K562 (cell line): ENCODE measurements at regions of chr17 and their contacts with region 1.

Region 1: DNA sequence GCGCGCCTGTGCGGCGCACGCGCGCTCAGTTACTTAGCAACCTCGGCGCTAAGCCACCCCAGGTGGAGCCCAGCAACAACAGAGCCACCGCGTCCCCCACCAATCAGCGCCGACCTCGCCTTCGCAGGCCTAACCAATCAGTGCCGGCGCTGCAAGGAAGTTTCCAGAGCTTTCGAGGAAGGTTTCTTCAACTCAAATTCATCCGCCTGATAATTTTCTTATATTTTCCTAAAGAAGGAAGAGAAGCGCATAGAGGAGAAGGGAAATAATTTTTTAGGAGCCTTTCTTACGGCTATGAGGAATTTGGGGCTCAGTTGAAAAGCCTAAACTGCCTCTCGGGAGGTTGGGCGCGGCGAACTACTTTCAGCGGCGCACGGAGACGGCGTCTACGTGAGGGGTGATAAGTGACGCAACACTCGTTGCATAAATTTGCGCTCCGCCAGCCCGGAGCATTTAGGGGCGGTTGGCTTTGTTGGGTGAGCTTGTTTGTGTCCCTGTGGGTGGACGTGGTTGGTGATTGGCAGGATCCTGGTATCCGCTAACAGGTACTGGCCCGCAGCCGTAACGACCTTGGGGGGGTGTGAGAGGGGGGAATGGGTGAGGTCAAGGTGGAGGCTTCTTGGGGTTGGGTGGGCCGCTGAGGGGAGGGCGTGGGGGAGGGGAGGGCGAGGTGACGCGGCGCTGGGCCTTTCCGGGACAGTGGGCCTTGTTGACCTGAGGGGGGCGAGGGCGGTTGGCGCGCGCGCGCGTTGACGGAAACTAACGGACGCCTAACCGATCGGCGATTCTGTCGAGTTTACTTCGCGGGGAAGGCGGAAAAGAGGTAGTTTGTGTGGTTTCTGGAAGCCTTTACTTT is at the start of gene UBB:
- DNase-seq: peak; percentile 90 to 96 (median 92)
- ATAC-seq: peak; percentile 95
- H3K4me3 ChIP-seq: peak within 1 kb of the TSS; percentile 55
- H3K27ac ChIP-seq: peak within 1 kb of the TSS; percentile 94
- H3K4me1 ChIP-seq: peaks cover 17 to 23% of the 10 kb centered on the region in 2 experiments; a peak in 4 of 5 replicates
- H3K27me3 ChIP-seq: no peaks in the 10 kb centered on the region
- CTCF ChIP-seq: no peak; a peak in 3 of 6 replicates
- EP300 ChIP-seq: peak; percentile 64
- POLR2A ChIP-seq: peak; percentile 99
- RAD21 ChIP-seq: no peak
- polyA plus RNA-seq, gene UBB: 3,942 to 4,143 TPM

Region 2: DNA sequence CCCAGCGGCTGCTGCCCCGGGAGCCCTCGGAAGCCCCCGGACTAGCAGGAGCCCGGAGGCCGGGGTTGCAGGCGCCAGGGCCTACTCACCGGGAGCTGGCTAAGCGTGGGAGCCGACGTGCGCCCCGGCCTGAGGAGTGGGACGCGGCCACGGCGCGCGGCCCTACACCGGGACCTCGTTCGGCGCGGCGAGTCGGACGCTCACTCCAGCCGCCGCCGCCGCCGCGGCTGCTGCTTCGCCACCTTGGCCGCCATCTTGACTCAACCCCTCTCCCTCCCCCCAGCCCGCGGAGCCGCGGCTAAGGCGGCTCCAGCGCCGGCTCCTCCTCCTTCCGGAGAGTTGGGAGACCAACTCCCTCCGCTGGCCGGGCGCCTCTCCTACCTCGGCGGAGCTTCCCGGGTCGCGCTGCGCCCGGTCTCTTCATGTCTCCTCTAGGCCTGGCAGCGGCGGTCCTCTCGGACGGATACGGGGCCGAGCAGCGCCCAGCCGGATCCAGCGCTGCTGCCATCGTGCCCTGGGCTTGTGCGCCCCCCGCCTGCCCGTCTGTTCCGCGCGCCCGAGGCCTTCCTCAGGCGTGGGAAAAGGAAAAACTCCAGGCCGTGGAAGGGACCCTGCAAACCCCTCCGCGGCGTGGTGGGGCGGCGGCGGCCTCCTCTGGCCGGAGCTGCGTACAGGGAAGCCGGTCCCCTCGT is 165.4 kb before region 1 on chr17 and contains the start of gene NCOR1:
- CTCF ChIA-PET with region 1: no interaction called
- POLR2A ChIA-PET with region 1: interaction called, 10 read pairs
- in situ Hi-C with region 1: no loop called
- intact Hi-C with region 1: no loop called
- DNase-seq: peak; percentile 71 to 92 (median 76)
- ATAC-seq: peak; percentile 90
- H3K4me3 ChIP-seq: peak within 1 kb of the TSS; percentile 97
- H3K27ac ChIP-seq: peak within 1 kb of the TSS; percentile 97
- H3K4me1 ChIP-seq: peaks cover 0 to 12% of the 10 kb centered on the region in 2 experiments; a peak in 2 of 5 replicates
- H3K27me3 ChIP-seq: no peaks in the 10 kb centered on the region
- CTCF ChIP-seq: peak; percentile 19 to 45 (median 43); a peak in 4 of 6 replicates
- EP300 ChIP-seq: no peak
- POLR2A ChIP-seq: peak; percentile 90
- RAD21 ChIP-seq: peak in 1 of 2 experiments; percentile 27; a peak in 2 of 4 replicates
- polyA plus RNA-seq, gene NCOR1: 20.2 to 35.3 TPM

Region 3: DNA sequence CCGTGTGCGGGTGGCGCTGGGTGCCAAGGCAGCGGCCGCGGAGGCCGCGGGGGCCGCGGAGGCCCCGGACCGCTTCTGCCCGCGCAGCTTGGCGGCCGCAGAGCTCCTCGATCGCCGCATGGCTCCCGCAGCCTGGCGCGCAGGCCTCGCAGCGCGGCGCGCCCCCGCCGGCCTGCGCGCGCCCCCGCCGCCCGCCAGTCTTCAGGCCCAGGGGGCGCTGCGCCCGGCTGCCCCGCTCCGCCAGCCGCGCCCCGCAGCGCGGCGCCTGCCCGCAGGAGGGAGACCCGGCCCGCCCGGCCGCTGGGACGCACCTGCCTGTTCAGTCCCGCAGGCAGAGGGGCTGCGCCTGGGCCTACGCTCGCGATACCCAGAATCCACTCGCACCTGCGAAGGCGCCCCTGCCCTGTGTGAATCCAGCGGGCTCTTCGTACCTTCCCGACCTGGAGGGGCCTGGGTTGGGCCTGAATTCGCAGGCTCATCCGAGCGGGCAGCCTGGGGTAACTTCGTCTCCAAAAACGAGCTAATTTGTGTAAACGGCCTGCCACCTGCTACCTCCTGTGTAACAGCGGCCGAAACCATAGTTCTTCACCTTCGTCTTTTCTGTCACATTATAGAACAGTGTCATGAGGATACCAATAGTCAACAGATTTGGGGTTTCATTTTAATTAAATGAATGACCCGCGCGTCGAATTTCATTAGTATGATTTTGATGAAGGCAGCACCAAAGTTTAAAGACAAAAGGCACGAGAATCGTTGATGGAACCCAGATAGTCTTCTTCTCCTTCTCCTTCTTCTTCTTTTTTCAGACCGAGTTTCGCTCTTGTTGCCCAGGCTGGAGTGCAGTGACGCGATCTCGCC is 27.3 kb before region 1 on chr17 and contains the start of gene CENPV:
- CTCF ChIA-PET with region 1: no interaction called
- POLR2A ChIA-PET with region 1: interaction called, 10 read pairs
- in situ Hi-C with region 1: no loop called
- intact Hi-C with region 1: no loop called
- DNase-seq: peak; percentile 65 to 82 (median 80)
- ATAC-seq: peak; percentile 74
- H3K4me3 ChIP-seq: peak within 1 kb of the TSS; percentile 93
- H3K27ac ChIP-seq: peak within 1 kb of the TSS; percentile 90
- H3K4me1 ChIP-seq: peaks cover 0 to 15% of the 10 kb centered on the region in 2 experiments; a peak in 4 of 5 replicates
- H3K27me3 ChIP-seq: no peaks in the 10 kb centered on the region
- CTCF ChIP-seq: peak in 2 of 3 experiments; percentile 28 to 47; a peak in 2 of 6 replicates
- EP300 ChIP-seq: no peak
- POLR2A ChIP-seq: no peak
- RAD21 ChIP-seq: no peak
- polyA plus RNA-seq, gene CENPV: 17.8 to 25.8 TPM

Region 4: GRCh38 chr17:16398270-16399267 is 17.7 kb after region 1 on chr17:
- CTCF ChIA-PET with region 1: no interaction called
- POLR2A ChIA-PET with region 1: interaction called, 13 read pairs
- in situ Hi-C with region 1: no loop called
- intact Hi-C with region 1: no loop called
- DNase-seq: peak; percentile 52 to 83 (median 54)
- ATAC-seq: peak; percentile 75
- H3K4me3 ChIP-seq: no peak overlapping the region
- H3K27ac ChIP-seq: peak overlapping the region; percentile 64
- H3K4me1 ChIP-seq: peaks cover 2 to 21% of the 10 kb centered on the region in 2 experiments; a peak in 4 of 5 replicates
- H3K27me3 ChIP-seq: no peaks in the 10 kb centered on the region
- CTCF ChIP-seq: no peak
- EP300 ChIP-seq: peak; percentile 80
- POLR2A ChIP-seq: no peak
- RAD21 ChIP-seq: no peak

Region 5: DNA sequence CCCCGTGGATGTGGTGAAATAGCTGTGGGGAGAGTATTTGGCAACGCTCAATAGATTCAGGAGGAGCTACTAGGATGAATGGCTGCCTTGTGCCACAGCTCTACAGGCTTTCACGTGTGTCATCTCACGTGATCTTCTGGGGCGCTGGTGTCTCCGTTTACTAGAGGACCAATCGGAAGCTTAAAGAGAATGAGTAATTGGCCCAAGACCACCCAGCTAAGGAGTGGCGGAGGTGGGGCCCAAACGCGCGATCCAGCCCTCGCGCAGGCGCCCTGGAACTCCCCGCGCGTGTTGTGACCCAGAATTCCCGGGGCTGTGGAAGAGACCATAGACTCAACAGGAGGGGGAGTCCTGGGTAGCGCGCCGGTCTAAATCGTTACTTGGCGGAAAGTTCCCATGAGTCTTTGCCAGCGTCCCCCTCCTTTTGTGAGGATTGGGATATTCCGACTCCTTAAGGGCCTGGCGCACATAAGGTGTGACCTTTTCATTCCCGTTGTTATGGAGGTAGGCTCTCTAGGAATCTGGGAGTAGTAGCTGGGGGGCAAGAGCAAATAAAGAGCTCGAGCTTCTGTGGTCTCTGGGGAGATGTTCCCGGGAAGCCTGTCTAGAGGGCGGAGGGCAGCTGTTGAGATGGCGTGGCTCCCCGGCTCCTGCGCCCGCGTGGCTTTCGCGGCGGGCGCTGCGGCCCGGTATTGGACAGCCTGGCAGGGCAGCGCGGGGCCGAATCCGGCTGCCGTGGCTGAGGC is 57.9 kb after region 1 on chr17:
- CTCF ChIA-PET with region 1: no interaction called
- POLR2A ChIA-PET with region 1: interaction called, 39 read pairs
- in situ Hi-C with region 1: no loop called
- intact Hi-C with region 1: loop called (anchors 2 kb)
- DNase-seq: peak; percentile 92 to 98 (median 94)
- ATAC-seq: peak; percentile 88
- H3K4me3 ChIP-seq: peak overlapping the region; percentile 99
- H3K27ac ChIP-seq: peak overlapping the region; percentile 98
- H3K4me1 ChIP-seq: peaks cover 26 to 31% of the 10 kb centered on the region in 2 experiments
- H3K27me3 ChIP-seq: no peaks in the 10 kb centered on the region
- CTCF ChIP-seq: no peak
- EP300 ChIP-seq: peak; percentile 46
- POLR2A ChIP-seq: peak; percentile 99
- RAD21 ChIP-seq: no peak

Region 6: DNA sequence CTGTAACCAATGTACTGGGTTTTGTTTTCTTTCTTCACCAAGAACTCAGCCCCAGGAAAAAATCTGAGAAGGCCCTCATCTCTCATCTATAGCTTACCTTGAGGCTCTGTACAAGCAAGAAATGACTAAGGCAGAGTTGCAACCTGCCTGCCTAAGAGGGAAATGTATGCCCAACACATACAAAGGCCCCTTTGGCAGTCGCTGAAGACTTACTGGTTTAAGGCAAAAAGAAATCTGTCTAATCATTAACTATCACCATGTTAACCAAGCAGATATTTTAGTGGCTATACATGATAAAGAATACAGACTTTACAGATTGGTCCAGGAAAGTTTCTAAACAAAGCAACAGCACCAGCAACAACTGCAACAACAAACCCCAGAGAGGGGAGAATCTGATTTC is 258.6 kb after region 1 on chr17:
- CTCF ChIA-PET with region 1: no interaction called
- POLR2A ChIA-PET with region 1: no interaction called
- in situ Hi-C with region 1: no loop called
- intact Hi-C with region 1: no loop called
- DNase-seq: no peak
- ATAC-seq: no peak
- H3K4me3 ChIP-seq: no peak overlapping the region
- H3K27ac ChIP-seq: no peak overlapping the region
- H3K4me1 ChIP-seq: no peaks in the 10 kb centered on the region
- H3K27me3 ChIP-seq: no peaks in the 10 kb centered on the region
- CTCF ChIP-seq: no peak
- EP300 ChIP-seq: no peak
- POLR2A ChIP-seq: no peak
- RAD21 ChIP-seq: no peak